ENCODE measurements at regions of chr11 and their contacts with region 1.

Region 1: DNA sequence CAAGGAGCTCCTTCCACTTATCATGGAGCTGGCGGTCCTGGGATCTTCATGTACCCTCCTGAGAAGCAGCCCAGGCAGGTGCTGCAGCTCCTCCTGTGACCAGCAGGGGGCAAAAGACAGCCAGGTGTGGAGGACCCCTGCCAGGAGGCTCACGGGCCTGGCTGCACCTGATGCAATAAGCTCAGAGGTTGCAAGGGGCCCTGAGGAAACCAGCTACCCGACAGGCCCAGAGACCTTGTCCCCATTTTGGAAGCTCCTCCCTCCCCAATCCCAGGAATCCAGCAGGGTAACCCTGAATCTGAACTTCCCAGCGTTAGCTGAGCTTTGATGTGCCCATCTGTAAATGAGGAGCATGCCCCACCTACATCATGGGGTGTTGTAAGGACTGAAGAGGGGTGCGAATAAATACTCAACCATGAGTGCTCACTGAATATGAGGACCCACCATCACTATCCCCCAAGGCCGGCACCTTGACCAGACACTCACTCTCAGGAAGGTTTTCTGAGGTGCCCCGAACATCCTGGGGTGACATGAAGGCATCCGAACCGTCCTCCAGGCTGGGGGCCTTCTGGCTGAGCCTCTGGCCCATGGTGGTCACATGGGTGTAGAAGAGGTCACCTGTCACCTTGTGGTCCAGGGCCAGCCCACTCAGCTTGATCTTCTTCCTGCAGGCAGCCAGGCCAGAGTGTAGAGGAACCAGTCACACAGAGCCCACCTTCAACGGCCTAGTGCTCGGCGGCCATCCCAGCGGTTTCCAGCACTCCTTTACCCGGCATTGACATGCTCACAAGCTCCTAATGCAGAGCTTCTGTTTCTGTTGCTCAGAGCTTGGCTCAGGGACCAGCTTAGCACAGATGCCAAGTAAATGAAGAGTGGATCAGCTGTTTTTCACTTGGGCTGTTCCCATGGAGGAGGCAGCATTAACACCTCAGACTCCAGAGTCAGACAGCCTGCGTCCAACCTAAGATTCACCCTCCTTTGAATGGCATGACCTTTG is 21.7 kb downstream of the SLC43A1 start:
- DNase-seq: peak; percentile 50
- H3K4me3 Mint-ChIP-seq: no peak overlapping the region
- H3K27ac Mint-ChIP-seq: peak overlapping the region; percentile 23
- H3K4me1 Mint-ChIP-seq: peaks cover 11% of the 10 kb centered on the region
- H3K27me3 Mint-ChIP-seq: no peaks in the 10 kb centered on the region

Region 2: GRCh38 chr11:57456960-57457642 is 36.7 kb before region 1 on chr11:
- intact Hi-C with region 1: loop called (anchors 5 kb)
- DNase-seq: peak; percentile 65
- H3K4me3 Mint-ChIP-seq: peak overlapping the region; percentile 72
- H3K27ac Mint-ChIP-seq: no peak overlapping the region
- H3K4me1 Mint-ChIP-seq: peaks cover 36% of the 10 kb centered on the region
- H3K27me3 Mint-ChIP-seq: peaks cover 53% of the 10 kb centered on the region

Region 3: DNA sequence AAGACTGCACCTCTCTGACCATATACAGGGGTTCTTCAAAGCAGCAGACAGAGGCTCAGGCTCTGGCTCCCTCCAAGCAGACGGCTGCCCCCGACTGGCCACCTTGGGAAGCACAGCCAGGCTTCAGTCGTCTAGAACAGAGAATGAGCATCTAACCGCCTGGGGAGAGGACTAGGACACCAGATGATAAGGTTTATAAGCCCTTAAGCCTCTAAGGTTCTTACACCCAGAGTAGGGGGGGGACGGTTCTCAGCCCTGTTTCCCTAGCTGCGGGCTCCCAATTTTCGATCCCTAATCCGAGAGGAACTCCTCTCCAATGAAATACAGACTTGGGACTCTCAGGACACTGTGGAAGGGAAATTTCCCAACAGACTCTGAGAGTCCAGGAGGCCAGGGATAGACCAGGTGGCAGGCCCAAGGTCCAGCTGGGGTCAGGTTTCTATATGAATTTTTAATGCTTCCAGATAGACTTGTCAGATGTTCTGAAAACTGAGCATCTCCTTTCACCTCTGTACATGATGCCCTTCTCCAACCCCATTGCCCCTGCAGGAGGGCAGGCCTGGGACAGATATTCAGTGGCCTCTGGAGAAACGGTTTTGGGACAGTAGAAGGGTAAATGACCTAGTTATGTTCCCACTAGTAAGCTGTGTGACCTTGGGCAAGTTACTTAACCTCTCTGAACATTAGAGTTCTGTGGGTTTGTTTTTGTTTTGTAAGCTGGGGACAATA is 13.2 kb before region 1 on chr11:
- intact Hi-C with region 1: loop called (anchors 1 kb)
- DNase-seq: peak; percentile 62
- H3K4me3 Mint-ChIP-seq: no peak overlapping the region
- H3K27ac Mint-ChIP-seq: no peak overlapping the region
- H3K4me1 Mint-ChIP-seq: peaks cover 12% of the 10 kb centered on the region
- H3K27me3 Mint-ChIP-seq: peaks cover 49% of the 10 kb centered on the region

Region 4: GRCh38 chr11:57515332-57516060 is 21.7 kb after region 1 on chr11 and contains the start of gene SLC43A1:
- intact Hi-C with region 1: loop called (anchors 1 kb)
- DNase-seq: peak; percentile 9
- H3K4me3 Mint-ChIP-seq: peak within 1 kb of the TSS; percentile 99
- H3K27ac Mint-ChIP-seq: peak within 1 kb of the TSS; percentile 94
- H3K4me1 Mint-ChIP-seq: peaks cover 17% of the 10 kb centered on the region
- H3K27me3 Mint-ChIP-seq: peaks cover 4% of the 10 kb centered on the region
- total RNA-seq, gene SLC43A1: 29.1 and 30.3 TPM in 2 replicates

Region 5: DNA sequence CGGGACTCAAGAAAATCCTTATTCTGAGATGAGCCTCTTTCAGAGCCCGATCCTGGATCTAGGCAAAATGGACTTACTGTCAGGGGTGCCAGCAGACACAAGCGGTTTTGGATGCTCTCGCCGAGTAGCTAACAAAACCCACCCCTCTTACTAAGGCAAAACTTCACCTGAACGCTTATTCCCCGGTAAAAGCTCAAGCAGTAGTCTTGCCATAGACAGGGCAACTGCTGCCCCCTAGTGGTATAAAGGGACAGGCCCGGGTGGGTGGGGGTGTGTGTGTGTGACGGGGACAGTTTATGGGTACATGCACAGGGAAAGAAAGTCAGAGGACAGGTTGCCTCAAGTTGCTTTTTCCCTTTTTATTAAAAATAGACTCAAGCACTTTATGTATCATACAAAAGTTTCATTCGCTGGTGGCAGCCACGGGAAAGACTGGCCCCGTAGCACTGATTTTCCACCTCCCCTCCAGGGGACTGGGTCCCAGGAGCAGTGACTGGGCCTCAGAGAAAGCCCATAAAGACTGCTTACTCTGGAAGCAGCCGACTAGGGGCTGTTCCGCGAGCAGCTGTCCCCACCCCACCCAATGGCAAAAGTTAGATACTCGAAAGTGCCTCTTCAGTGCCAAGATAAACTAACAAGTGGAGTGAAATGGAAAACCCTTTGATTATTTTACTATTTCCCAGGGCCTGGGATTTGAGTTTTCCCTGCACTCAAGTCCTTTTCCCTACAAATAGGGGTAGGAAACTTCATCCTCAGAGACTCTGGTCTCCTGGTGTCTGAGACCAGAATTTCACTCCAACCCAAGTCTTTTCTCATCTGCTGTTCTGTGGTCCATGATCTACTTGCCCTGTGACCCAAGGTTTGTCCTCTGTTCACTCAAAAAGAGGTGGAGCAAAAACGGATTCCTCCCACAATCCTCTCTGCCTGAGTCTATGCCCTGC is 151.2 kb after region 1 on chr11:
- intact Hi-C with region 1: loop called (anchors 1 kb)
- DNase-seq: peak; percentile 77
- H3K4me3 Mint-ChIP-seq: no peak overlapping the region
- H3K27ac Mint-ChIP-seq: no peak overlapping the region
- H3K4me1 Mint-ChIP-seq: peaks cover 48% of the 10 kb centered on the region
- H3K27me3 Mint-ChIP-seq: peaks cover 39% of the 10 kb centered on the region

Region 6: DNA sequence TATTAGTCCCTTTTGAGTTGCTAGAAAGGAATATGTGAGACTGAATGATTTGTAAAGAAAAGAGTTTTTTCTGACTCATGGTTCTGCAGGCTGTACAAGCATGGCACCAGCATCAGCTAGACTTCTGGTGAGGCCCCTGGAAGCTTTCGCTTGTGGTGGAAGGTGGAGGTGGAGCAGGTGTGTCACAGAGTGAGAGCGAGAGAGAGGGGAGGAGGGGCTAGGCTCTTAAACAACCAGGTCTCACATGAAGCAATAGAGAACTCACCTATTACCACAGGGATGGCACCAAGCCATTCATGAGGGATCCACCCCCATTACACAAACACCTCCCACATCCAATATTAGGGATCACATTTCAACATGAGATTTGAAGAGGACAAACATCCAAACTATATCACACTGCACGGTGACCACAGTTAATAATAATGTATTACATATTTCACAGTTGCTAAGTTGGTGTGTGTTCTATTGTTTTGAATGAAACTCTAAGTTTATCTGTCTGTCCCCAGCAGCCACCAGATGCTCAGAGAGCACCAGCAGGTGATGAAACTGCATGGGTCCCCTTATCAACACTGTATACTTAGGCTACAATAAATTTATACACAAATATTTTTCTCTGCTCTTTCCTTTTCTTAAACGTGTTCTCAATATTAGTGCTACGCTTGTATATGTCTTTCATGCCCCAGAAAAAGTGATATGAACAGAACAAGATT is 1099.1 kb after region 1 on chr11:
- intact Hi-C with region 1: no loop called
- DNase-seq: no peak
- H3K4me3 Mint-ChIP-seq: no peak overlapping the region
- H3K27ac Mint-ChIP-seq: peak overlapping the region; percentile 64
- H3K4me1 Mint-ChIP-seq: peaks cover 63% of the 10 kb centered on the region
- H3K27me3 Mint-ChIP-seq: no peaks in the 10 kb centered on the region